Mammary epithelial cell (primary cell): ENCODE measurements at regions of chr22 and their contacts with region 1.

Region 1: DNA sequence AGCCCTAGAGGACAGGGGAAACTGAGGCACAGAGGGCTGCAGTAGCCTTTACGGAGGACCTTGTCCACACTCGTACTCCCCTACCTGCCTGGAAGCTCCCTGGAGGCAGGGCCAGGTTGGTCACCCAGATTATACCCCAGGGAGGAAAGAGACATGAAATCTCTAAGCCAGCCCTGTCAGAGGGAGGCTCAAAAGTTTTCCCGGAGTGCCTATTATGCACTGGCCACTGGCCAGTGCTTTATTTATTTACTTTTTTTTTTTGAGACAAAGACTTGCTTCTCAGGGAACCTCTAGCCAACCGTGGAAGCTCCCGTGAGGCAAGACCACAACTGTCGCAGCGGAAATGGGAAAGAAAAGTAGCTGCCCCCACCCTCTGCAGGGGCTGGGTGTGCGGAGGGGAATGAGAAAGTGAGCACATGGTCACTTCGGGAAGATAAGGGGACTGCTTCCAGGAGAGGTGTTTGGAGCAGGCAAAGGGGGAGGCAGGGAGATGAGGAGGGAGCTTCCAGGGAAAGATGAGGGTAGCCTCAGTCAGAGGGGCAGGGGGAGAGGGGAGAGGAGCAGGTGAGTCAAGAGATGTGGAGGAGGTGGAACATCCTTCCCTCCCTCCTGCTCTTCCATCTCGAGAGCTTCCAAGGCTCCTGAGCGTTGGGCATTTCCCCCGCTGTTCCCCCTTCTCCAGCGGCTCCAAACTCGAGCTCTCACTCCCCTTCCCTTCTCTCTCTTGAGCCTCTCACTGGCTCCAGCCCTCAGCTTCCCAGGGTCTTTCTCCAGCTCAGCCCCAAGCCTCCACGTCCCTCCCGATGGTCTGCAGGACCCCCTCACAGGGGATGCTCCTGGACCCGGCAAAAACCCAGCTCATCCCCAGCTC is 4.3 kb downstream of the IL2RB start:
- DNase-seq: no peak
- H3K4me3 ChIP-seq: no peak overlapping the region
- H3K27ac ChIP-seq: no peak overlapping the region
- H3K4me1 ChIP-seq: peaks cover 13% of the 10 kb centered on the region
- H3K27me3 ChIP-seq: no peaks in the 10 kb centered on the region
- CTCF ChIP-seq: no peak

Region 2: GRCh38 chr22:37109242-37109917 is 36.0 kb before region 1 on chr22 and contains the start of gene TMPRSS6:
- CTCF ChIA-PET with region 1: interaction called, 20 read pairs
- dilution Hi-C with region 1: no loop called
- in situ Hi-C with region 1: no loop called
- intact Hi-C with region 1: no loop called
- DNase-seq: no peak
- H3K4me3 ChIP-seq: no peak within 1 kb of the TSS
- H3K27ac ChIP-seq: no peak within 1 kb of the TSS
- H3K4me1 ChIP-seq: no peaks in the 10 kb centered on the region
- H3K27me3 ChIP-seq: no peaks in the 10 kb centered on the region
- CTCF ChIP-seq: no peak
- total RNA-seq, gene TMPRSS6: not detected

Region 3: GRCh38 chr22:37176218-37177091 is 31.0 kb after region 1 on chr22:
- CTCF ChIA-PET with region 1: no interaction called
- dilution Hi-C with region 1: no loop called
- in situ Hi-C with region 1: no loop called
- intact Hi-C with region 1: no loop called
- DNase-seq: no peak
- H3K4me3 ChIP-seq: no peak overlapping the region
- H3K27ac ChIP-seq: no peak overlapping the region
- H3K4me1 ChIP-seq: peaks cover 7% of the 10 kb centered on the region
- H3K27me3 ChIP-seq: peaks cover 8% of the 10 kb centered on the region
- CTCF ChIP-seq: no peak